ENCODE measurements at regions of chr12 and their contacts with region 1.

Region 1: DNA sequence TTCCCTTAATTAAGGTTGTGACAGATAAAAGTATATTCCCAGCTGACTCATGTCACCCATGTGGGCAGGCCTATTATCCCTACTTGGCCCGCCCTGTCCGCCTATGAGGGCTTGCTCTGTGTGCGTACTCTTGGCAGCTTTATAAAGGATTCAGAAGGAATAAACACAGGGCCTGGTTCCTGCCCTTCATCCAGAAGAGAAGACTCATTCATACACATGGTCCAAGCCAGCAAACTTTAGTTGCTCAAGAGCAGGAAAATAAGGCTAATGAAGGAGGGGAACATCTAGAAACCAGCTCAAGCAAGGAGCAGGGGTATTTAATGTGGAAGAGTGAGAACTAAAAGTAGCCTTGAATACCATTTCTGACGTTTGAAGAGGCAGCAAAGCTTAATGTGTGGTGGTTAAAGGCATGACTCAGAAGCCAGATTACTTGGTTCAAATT is 141.9 kb downstream of the CRADD start:
- DNase-seq: no peak
- H3K4me3 Mint-ChIP-seq: no peak overlapping the region
- H3K27ac Mint-ChIP-seq: no peak overlapping the region
- H3K4me1 Mint-ChIP-seq: no peaks in the 10 kb centered on the region
- H3K27me3 Mint-ChIP-seq: no peaks in the 10 kb centered on the region
- CTCF ChIP-seq: no peak

Region 2: GRCh38 chr12:93019975-93020630 is 799.0 kb before region 1 on chr12:
- CTCF ChIA-PET with region 1: interaction called, 10 read pairs
- intact Hi-C with region 1: no loop called
- DNase-seq: peak; percentile 64
- H3K4me3 Mint-ChIP-seq: no peak overlapping the region
- H3K27ac Mint-ChIP-seq: peak overlapping the region; percentile 86
- H3K4me1 Mint-ChIP-seq: peaks cover 66% of the 10 kb centered on the region
- H3K27me3 Mint-ChIP-seq: no peaks in the 10 kb centered on the region
- CTCF ChIP-seq: no peak